ENCODE measurements at regions of chr19 and their contacts with region 1.

Region 1: GRCh38 chr19:37095859-37096258 is 17.6 kb downstream of the ZNF420 start:
- DNase-seq: no peak
- ATAC-seq: no peak
- H3K4me3 ChIP-seq: no peak overlapping the region
- H3K27ac ChIP-seq: no peak overlapping the region
- H3K4me1 ChIP-seq: no peaks in the 10 kb centered on the region
- H3K27me3 ChIP-seq: no peaks in the 10 kb centered on the region
- CTCF ChIP-seq: no peak
- POLR2A ChIP-seq: no peak
- RAD21 ChIP-seq: no peak

Region 2: GRCh38 chr19:36151144-36152018 is 944.5 kb before region 1 on chr19:
- CTCF ChIA-PET with region 1: no interaction called
- POLR2A ChIA-PET with region 1: interaction called, 10 read pairs
- dilution Hi-C with region 1: no loop called
- in situ Hi-C with region 1: no loop called
- intact Hi-C with region 1: no loop called
- DNase-seq: no peak
- ATAC-seq: peak; percentile 52
- H3K4me3 ChIP-seq: no peak overlapping the region
- H3K27ac ChIP-seq: no peak overlapping the region
- H3K4me1 ChIP-seq: peaks cover 6% of the 10 kb centered on the region; the same call in 1 of the 2 replicates
- H3K27me3 ChIP-seq: no peaks in the 10 kb centered on the region
- CTCF ChIP-seq: no peak
- POLR2A ChIP-seq: no peak
- RAD21 ChIP-seq: no peak